ENCODE measurements at regions of chr9 and their contacts with region 1.

Region 1: DNA sequence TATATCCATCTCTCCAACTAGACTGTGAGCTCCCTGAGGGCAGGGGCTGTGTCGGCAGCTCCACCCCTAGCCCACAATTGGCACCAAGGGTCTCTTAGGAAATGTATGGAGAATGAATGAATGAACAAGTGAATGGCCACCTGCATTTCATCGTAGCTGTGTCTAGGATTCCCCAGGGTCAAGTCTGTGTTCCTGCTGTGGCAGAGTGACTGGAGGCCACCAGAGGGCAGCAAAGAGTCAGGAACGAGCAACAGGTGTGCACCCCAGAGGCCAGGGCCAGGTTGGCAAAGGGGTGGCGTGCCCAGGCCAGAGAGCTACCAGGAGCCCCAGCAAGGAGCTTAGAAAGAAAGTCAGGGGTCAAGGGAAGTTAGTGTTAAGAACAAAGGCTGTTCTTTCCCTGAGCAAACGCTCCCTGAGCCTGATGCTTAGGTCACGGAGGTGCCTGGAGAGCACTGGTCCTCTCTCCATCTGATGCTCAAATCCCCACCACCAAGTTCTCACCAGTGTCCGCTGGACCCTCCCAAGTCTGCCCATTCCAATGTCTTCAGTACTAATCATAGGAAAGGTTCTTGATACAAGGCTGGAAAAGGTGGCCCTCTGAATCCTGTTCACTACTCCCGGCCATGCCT is 160.7 kb downstream of the PAX5 start:
- DNase-seq: peak; percentile 43
- ATAC-seq: peak; percentile 99
- H3K4me3 ChIP-seq: no peak overlapping the region
- H3K27ac ChIP-seq: no peak overlapping the region
- H3K4me1 ChIP-seq: no peaks in the 10 kb centered on the region
- H3K27me3 ChIP-seq: peaks cover 18% of the 10 kb centered on the region; the same call in 1 of the 2 replicates
- CTCF ChIP-seq: peak; percentile 91 to 96 (median 92)
- POLR2A ChIP-seq: no peak
- RAD21 ChIP-seq: peak; percentile 97

Region 2: DNA sequence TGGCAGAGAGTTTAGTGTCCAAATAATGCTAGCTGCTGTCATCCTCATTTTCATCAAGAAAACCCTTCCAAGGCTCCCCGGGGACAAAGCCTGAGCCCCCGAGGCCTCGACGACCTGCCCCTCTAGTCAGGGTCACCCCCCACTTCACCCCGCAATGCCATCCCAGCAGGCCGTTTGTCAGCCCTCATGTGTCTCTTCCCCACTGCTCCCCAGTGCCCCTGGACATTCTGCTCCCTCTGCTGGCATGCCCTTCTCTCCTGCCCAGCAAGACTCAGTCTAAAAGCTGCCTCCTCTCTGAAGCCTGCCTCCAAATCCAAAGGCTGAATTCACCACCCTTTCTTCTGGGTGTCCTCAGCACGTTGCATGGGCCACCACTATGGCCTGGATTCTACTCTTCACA is 101.4 kb after region 1 on chr9:
- CTCF ChIA-PET with region 1: interaction called, 22 read pairs
- POLR2A ChIA-PET with region 1: no interaction called
- RAD21 ChIA-PET with region 1: no interaction called
- intact Hi-C with region 1: no loop called
- DNase-seq: no peak
- ATAC-seq: peak; percentile 60; the same call in 1 of the 2 replicates
- H3K4me3 ChIP-seq: no peak overlapping the region
- H3K27ac ChIP-seq: no peak overlapping the region
- H3K4me1 ChIP-seq: peaks cover 0 to 19% of the 10 kb centered on the region in 2 experiments; a peak in 3 of 4 replicates
- H3K27me3 ChIP-seq: no peaks in the 10 kb centered on the region
- CTCF ChIP-seq: peak; percentile 31 to 41 (median 33); a peak in 3 of 6 replicates
- POLR2A ChIP-seq: no peak
- RAD21 ChIP-seq: peak; percentile 52

Region 3: GRCh38 chr9:36980148-36980974 is 107.0 kb after region 1 on chr9:
- CTCF ChIA-PET with region 1: interaction called, 22 read pairs
- POLR2A ChIA-PET with region 1: no interaction called
- RAD21 ChIA-PET with region 1: no interaction called
- intact Hi-C with region 1: no loop called
- DNase-seq: peak; percentile 19
- ATAC-seq: peak; percentile 88
- H3K4me3 ChIP-seq: peak overlapping the region in 1 of 2 experiments; percentile 8; a peak in 1 of 4 replicates
- H3K27ac ChIP-seq: no peak overlapping the region
- H3K4me1 ChIP-seq: peaks cover 11 to 28% of the 10 kb centered on the region in 2 experiments
- H3K27me3 ChIP-seq: no peaks in the 10 kb centered on the region
- CTCF ChIP-seq: peak; percentile 41 to 54 (median 52); a peak in 5 of 6 replicates
- POLR2A ChIP-seq: no peak
- RAD21 ChIP-seq: peak; percentile 57

Region 4: DNA sequence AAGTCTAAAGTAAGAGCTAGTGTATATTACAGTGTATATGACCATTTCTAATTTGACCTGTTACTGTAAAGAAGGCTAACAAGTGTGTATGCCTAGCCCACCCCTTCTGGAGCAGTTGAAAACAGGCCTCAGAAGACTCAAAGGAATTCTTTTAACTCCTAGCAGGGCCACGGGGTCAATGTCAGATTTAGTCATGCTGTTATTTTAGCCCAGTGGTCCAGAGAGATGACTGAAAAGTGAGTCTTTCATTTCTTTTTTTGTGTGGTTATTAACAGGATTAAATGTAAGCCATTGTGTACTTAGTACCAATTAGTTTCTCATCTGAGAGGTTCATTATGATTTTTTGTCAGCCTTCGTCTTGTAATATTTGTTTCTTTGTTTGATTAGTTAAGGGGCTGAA is 271.4 kb after region 1 on chr9:
- CTCF ChIA-PET with region 1: no interaction called
- POLR2A ChIA-PET with region 1: no interaction called
- RAD21 ChIA-PET with region 1: no interaction called
- intact Hi-C with region 1: no loop called
- DNase-seq: no peak
- ATAC-seq: peak; percentile 52; the same call in 1 of the 2 replicates
- H3K4me3 ChIP-seq: no peak overlapping the region
- H3K27ac ChIP-seq: no peak overlapping the region
- H3K4me1 ChIP-seq: peaks cover 6 to 7% of the 10 kb centered on the region in 2 experiments
- H3K27me3 ChIP-seq: no peaks in the 10 kb centered on the region
- CTCF ChIP-seq: no peak
- POLR2A ChIP-seq: no peak
- RAD21 ChIP-seq: no peak

Region 5: GRCh38 chr9:37329576-37329975 is 456.2 kb after region 1 on chr9:
- CTCF ChIA-PET with region 1: interaction called, 3 read pairs
- POLR2A ChIA-PET with region 1: no interaction called
- RAD21 ChIA-PET with region 1: no interaction called
- intact Hi-C with region 1: loop called (anchors 10 kb)
- DNase-seq: no peak
- ATAC-seq: no peak; the same call in 1 of the 2 replicates
- H3K4me3 ChIP-seq: no peak overlapping the region
- H3K27ac ChIP-seq: no peak overlapping the region
- H3K4me1 ChIP-seq: no peaks in the 10 kb centered on the region
- H3K27me3 ChIP-seq: no peaks in the 10 kb centered on the region
- CTCF ChIP-seq: peak; percentile 9 to 34 (median 14); a peak in 3 of 6 replicates
- POLR2A ChIP-seq: no peak
- RAD21 ChIP-seq: peak; percentile 55

Region 6: GRCh38 chr9:37390759-37391158 is 517.4 kb after region 1 on chr9:
- CTCF ChIA-PET with region 1: interaction called, 4 read pairs
- POLR2A ChIA-PET with region 1: no interaction called
- RAD21 ChIA-PET with region 1: no interaction called
- intact Hi-C with region 1: loop called (anchors 10 kb)
- DNase-seq: peak; percentile 26
- ATAC-seq: peak; percentile 86
- H3K4me3 ChIP-seq: no peak overlapping the region
- H3K27ac ChIP-seq: no peak overlapping the region
- H3K4me1 ChIP-seq: peaks cover 0 to 5% of the 10 kb centered on the region in 2 experiments; a peak in 1 of 4 replicates
- H3K27me3 ChIP-seq: no peaks in the 10 kb centered on the region
- CTCF ChIP-seq: peak; percentile 44 to 83 (median 77); a peak in 5 of 6 replicates
- POLR2A ChIP-seq: no peak
- RAD21 ChIP-seq: peak; percentile 65